Caco-2 (cell line): ENCODE measurements at regions of chr9 and their contacts with region 1.

Region 1: DNA sequence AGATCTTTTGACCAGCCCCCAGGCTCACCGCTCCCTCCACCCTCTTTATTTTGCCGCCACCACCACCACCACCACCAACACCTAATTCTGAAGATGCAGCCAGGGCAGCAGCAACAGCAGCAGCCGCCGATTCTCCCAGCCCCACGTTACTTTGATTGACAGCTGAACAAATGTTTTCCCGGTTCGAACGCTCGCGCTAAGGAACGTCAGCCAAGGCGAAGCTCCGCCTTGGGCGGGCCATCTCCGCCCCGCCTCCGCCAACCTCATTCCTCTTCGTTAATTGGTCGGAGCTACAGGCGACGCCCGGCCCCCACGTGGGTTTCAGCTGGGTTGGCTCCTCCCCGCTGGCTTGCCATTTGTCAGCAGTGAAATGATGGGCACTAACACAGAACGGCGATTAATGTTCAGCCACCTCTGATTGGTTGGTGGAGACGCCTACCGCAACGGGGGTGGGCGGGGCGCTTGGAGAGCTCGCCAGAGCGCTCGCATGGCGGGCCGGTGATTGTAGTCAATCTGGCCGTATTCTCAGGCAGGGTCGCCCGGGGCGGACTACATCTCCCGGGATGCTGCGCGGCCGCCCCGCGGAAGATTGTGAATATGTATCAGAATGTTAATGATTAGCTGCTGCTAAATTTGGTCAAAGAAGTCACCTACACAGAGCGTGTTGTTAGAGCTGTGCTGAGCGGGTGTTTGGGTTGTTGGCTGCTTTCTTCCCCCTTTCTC is at the start of gene TLE4:
- DNase-seq: peak; percentile 89 to 96
- H3K4me3 ChIP-seq: peak within 1 kb of the TSS; percentile 50
- H3K4me3 Mint-ChIP-seq: peak within 1 kb of the TSS; percentile 68
- H3K27ac Mint-ChIP-seq: no peak within 1 kb of the TSS
- H3K4me1 ChIP-seq: no peaks in the 10 kb centered on the region
- H3K4me1 Mint-ChIP-seq: no peaks in the 10 kb centered on the region
- H3K27me3 ChIP-seq: no peaks in the 10 kb centered on the region
- H3K27me3 Mint-ChIP-seq: no peaks in the 10 kb centered on the region
- CTCF ChIP-seq: no peak
- total RNA-seq, gene TLE4: 8.1 and 9.2 TPM in 2 replicates

Region 2: DNA sequence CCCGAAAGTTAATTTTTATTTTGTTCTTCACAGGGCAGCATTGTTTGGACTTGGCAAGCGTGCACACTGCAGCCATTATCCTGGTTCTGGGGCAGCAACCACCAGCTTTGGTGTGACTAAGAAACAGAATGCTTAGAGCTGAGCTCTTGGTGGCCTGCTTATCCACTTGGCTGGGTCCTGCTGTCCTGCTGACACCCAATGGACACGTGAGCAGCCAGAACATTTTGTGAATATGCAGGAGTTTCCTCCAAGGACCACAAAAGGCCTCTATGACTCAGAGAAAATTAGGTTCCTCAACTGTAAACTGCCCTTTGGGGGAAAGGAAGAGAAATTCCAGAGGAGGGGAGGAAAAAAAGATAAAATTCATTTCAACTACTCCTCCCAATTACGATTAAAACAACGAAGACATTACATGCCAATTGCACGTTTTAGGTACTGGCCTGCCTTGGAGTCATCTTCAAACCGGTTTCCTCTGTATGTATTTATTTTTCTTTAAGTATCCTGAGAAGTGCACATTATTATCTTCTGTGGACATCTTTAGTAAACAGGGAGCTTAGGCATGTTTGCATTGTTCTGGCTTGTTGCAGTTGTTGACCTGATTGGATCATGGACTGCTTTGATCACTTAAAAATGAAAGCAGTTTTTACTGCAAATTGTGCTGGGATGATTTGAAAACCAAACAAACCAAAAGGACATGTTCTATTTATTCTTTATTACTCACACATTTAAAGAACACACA is 82.1 kb before region 1 on chr9:
- CTCF ChIA-PET with region 1: no interaction called
- POLR2A ChIA-PET with region 1: no interaction called
- intact Hi-C with region 1: loop called (anchors 2 kb)
- DNase-seq: peak; percentile 25
- H3K4me3 ChIP-seq: no peak overlapping the region
- H3K4me3 Mint-ChIP-seq: peak overlapping the region; percentile 33
- H3K27ac Mint-ChIP-seq: no peak overlapping the region
- H3K4me1 ChIP-seq: no peaks in the 10 kb centered on the region
- H3K4me1 Mint-ChIP-seq: peaks cover 7% of the 10 kb centered on the region
- H3K27me3 ChIP-seq: no peaks in the 10 kb centered on the region
- H3K27me3 Mint-ChIP-seq: no peaks in the 10 kb centered on the region
- CTCF ChIP-seq: no peak

Region 3: DNA sequence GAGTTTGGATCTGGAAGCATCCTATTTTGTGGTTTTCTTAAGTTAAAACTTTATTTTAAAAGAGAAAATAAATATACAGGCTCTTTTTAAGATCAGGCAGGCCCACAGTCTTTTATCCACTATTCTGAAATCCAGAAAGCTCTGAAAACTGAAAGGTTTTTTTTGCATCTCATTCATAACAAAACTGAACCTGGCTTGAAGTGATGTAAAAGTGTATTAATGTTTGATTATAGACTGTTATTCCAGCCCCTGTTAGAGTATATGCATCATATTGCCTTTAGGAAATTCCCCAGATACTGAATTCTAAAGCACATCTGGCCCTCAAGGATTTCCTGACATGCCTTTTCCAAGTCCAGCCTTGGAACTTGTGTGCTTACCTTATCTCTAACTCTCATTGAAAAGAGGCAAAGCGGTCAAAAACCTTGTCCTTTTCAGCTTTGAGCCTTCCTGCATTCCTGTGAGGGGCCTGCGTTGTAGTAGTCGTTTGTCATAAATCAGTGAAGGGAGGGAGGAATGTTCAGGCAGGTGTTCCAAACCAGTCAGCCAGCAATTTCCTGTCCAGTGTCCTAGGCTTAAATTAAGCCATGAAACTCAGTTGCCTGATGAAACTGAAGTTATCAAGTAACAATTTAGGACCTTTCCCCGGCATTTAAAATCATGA is 110.7 kb after region 1 on chr9:
- CTCF ChIA-PET with region 1: no interaction called
- POLR2A ChIA-PET with region 1: no interaction called
- intact Hi-C with region 1: loop called (anchors 5 kb)
- DNase-seq: peak; percentile 55 to 71
- H3K4me3 ChIP-seq: no peak overlapping the region
- H3K4me3 Mint-ChIP-seq: no peak overlapping the region
- H3K27ac Mint-ChIP-seq: no peak overlapping the region
- H3K4me1 ChIP-seq: peaks cover 12% of the 10 kb centered on the region
- H3K4me1 Mint-ChIP-seq: peaks cover 5% of the 10 kb centered on the region
- H3K27me3 ChIP-seq: no peaks in the 10 kb centered on the region
- H3K27me3 Mint-ChIP-seq: no peaks in the 10 kb centered on the region
- CTCF ChIP-seq: no peak

Region 4: GRCh38 chr9:79764381-79764780 is 192.9 kb after region 1 on chr9:
- CTCF ChIA-PET with region 1: no interaction called
- POLR2A ChIA-PET with region 1: no interaction called
- intact Hi-C with region 1: loop called (anchors 10 kb)
- DNase-seq: no peak
- H3K4me3 ChIP-seq: no peak overlapping the region
- H3K4me3 Mint-ChIP-seq: no peak overlapping the region
- H3K27ac Mint-ChIP-seq: no peak overlapping the region
- H3K4me1 ChIP-seq: no peaks in the 10 kb centered on the region
- H3K4me1 Mint-ChIP-seq: peaks cover 9% of the 10 kb centered on the region
- H3K27me3 ChIP-seq: no peaks in the 10 kb centered on the region
- H3K27me3 Mint-ChIP-seq: no peaks in the 10 kb centered on the region
- CTCF ChIP-seq: no peak